ENCODE measurements at regions of chr5 and their contacts with region 1.

Region 1: DNA sequence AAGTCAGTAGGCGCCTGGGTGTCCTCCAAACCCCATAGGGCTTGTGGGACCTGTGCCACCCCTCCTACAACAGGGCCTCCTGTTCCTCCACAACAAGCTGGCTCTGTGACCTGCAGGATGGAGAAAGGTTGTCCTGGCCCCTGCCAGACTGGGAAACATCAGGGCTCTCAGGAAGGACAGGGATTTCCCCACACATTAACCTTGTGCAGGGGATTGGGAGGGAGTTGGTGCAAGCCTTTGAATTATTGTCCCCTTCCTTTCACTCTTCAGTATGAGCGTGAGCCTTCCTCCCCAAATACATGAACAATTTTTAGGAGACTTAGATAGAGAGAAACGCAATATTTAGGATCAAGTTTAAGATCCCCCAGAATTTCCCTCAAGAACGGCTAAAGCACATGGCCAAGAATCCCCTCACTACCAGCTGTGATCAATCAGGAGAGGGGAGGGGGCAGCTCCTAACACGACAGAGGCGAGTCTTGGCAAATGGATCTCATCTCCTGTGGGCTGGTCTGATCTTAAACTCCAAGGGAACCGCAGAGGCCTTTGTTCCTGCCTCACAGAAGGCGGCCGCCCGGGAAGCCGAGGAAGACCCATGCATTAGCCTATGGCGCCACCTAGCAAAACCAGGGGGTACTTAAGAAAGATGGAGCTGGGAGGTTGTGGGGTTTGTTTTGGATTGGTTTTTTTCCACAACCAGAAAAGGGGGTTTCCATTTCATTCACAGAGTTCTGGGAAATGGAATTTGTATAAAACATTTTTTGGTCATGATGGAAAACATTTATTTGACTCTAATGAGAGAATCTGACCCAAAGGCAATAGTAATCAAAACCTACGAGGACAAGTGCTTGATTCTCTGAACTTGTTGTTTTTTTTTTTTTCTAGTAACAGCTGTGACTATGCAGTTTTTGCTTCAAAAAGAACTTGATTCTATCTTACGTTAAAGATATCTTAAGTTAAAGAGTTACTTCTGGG is 36.1 kb upstream of the OSMR start:
- DNase-seq: peak; percentile 73 to 86 (median 82)
- H3K4me3 ChIP-seq: no peak overlapping the region
- H3K27ac ChIP-seq: no peak overlapping the region
- H3K4me1 ChIP-seq: no peaks in the 10 kb centered on the region
- H3K27me3 ChIP-seq: peaks cover 3 to 63% (median 18%) of the 10 kb centered on the region in 5 experiments

Region 2: GRCh38 chr5:38433160-38433861 is 376.4 kb before region 1 on chr5:
- CTCF ChIA-PET with region 1: interaction called, 11 read pairs
- POLR2A ChIA-PET with region 1: no interaction called
- DNase-seq: no peak
- H3K4me3 ChIP-seq: no peak overlapping the region
- H3K27ac ChIP-seq: no peak overlapping the region
- H3K4me1 ChIP-seq: no peaks in the 10 kb centered on the region
- H3K27me3 ChIP-seq: peaks cover 2 to 89% (median 25%) of the 10 kb centered on the region in 5 experiments

Measured in common myeloid progenitor, CD34-positive (primary cell).